Naive thymus-derived CD4-positive, alpha-beta T cell (primary cell): ENCODE measurements at regions of chr11 and their contacts with region 1.

Region 1: DNA sequence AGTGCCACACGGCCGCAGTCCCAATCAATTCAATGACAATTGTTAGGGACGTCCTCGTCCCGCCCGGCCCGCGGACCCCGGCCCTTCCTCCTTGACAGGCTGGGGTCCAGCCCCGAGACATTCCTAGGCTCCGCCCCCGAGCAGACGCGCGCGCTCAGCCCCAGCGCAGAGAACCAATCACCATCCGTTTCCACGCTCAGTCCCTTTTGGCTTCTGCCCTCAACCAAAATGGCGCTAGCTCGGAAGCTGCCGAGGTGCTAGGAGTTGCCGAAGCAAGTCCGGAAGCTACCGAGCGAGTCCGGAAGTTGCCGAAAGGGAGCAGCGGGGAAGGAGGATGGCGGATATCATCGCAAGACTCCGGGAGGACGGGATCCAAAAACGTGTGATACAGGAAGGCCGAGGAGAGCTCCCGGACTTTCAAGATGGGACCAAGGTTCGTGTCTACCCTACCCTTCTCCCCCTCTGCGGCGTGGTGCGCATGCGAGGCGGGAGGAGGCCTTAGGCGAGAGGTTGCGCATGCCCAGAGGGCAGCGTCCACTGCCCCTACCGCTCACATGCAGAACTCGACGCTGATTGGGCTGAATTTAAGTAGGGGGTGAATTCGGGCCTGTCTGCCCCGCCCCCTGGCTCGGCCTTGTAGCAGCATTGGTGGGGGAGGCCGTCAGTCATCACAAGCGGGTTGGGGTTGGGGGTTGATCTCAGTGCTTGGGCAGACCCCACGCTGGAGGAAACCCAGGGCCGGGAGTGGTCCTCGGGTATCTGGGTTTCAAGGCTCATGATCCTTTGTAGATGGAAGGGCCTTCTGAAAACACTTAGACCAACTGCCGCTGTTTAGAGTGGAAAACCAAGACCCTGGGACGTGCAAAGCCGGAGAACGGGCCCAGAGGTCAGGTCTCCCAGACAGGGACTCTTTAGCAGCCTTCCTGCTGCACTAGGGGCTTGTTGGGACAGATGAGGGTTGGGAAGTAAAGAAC is at the start of gene AIP:
- DNase-seq: peak; percentile 88 to 99 (median 98)
- ATAC-seq: peak; percentile 89
- H3K4me3 ChIP-seq: peak within 1 kb of the TSS; percentile 80
- H3K4me3 Mint-ChIP-seq: peak within 1 kb of the TSS; percentile 90 to 100 (median 96)
- H3K27ac ChIP-seq: peak within 1 kb of the TSS; percentile 80
- H3K27ac Mint-ChIP-seq: peak within 1 kb of the TSS; percentile 95 to 100 (median 99)
- H3K4me1 ChIP-seq: peaks cover 40 to 42% of the 10 kb centered on the region in 2 donors
- H3K4me1 Mint-ChIP-seq: peaks cover 40 to 57% (median 51%) of the 10 kb centered on the region in 7 donors
- H3K27me3 ChIP-seq: no peaks in the 10 kb centered on the region
- H3K27me3 Mint-ChIP-seq: peaks cover 0 to 5% (median 0%) of the 10 kb centered on the region in 5 donors
- total RNA-seq, gene AIP: 107 to 156 (median 137) TPM

Region 2: DNA sequence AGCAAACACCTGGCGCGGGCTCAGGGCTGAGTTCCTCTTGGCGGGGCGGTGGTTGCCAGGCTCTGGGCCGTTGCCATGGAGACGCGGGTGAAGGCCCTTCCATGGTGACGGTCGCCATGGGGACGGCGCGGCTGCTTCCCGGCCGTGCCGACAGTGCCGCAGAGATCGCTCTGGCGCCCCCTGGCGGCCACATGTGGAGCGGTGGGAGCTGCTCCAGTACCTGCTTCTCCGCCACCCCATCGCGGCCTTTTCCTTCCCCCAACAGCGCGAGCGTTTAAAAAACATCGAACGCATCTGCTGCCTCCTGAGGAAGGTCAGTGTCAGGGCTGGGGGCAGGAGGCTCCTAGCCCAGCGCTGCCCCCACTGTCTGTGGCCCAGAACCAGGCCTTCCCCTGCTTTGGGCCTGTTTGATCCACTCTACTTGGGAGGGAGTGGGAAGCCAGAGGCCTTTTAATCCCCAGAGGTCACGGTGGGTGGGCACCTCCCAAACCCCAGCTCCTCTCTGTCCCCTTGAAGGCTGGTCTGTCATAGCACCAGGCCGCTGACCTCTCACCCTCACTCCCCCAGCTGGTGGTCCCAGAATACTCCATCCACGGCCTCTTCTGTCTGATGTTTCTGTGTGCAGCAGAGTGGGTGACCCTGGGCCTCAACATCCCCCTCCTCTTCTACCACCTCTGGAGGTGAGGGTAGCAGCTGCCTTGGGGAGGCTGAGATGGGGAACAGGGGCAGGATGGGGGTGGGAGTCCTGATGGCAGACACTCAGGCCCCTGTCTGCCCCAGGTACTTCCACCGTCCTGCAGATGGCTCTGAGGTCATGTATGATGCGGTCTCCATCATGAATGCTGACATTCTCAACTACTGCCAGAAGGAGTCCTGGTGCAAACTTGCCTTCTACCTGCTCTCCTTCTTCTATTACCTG is 1200.4 kb before region 1 on chr11:
- CTCF ChIA-PET with region 1: no interaction called
- POLR2A ChIA-PET with region 1: no interaction called
- intact Hi-C with region 1: loop called in 1 of 2 experiments (anchors 10 kb)
- DNase-seq: peak; percentile 96 to 100 (median 99)
- ATAC-seq: peak; percentile 94
- H3K4me3 ChIP-seq: no peak overlapping the region
- H3K4me3 Mint-ChIP-seq: peak overlapping the region in 9 of 10 donors; percentile 16 to 72 (median 59)
- H3K27ac ChIP-seq: peak overlapping the region; percentile 27
- H3K27ac Mint-ChIP-seq: peak overlapping the region; percentile 68 to 93 (median 85)
- H3K4me1 ChIP-seq: peaks cover 16 to 21% of the 10 kb centered on the region in 2 donors
- H3K4me1 Mint-ChIP-seq: peaks cover 18 to 52% (median 37%) of the 10 kb centered on the region in 7 donors
- H3K27me3 ChIP-seq: no peaks in the 10 kb centered on the region
- H3K27me3 Mint-ChIP-seq: peaks cover 0 to 14% (median 0%) of the 10 kb centered on the region in 5 donors

Region 3: DNA sequence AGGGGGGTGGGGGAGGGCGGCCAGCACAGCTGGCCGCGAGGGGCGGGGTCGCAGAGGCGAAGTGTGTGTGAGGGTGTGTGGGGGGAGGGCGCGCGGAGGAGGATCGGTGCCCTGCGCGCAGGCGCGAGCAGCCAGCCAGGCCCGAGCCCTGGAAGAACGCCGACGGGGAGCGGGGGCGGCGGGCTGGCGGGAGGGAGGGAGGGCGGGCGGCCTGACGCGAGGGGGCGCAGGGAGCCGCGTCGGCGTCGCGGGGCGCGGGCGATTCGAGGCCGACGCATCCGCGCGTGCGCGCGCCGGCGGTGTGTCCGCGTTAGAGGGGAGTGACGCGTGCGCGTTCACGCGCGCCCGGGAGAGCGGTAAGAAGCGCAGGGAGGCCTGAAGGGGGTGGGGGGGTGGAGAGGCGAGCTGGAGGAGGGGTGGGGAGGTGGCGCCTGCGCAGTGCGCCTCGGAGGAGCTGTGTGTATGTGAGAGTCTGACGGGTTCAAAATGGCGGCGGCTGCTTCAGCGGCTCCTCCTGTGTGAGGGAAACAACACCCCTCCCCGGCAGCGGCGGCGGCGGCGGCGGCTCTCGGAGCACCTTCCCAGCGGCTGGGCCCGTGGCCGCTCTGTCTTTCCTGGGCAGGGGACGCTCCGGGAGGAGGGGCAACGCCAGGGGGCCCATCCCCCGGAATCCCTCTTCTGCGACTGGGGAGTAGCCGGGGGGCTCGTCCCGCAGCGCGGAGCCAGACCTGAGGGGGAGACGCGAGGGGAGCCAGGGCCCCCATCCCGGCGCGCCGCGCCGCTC is 364.1 kb before region 1 on chr11 and contains the start of gene KDM2A:
- CTCF ChIA-PET with region 1: no interaction called
- POLR2A ChIA-PET with region 1: interaction called, 4 read pairs
- intact Hi-C with region 1: loop called in 1 of 2 experiments (anchors 2 kb)
- DNase-seq: peak; percentile 93 to 100 (median 98)
- ATAC-seq: peak; percentile 92
- H3K4me3 ChIP-seq: peak within 1 kb of the TSS; percentile 86
- H3K4me3 Mint-ChIP-seq: peak within 1 kb of the TSS; percentile 95 to 99 (median 98)
- H3K27ac ChIP-seq: peak within 1 kb of the TSS; percentile 98
- H3K27ac Mint-ChIP-seq: peak within 1 kb of the TSS; percentile 84 to 98 (median 95)
- H3K4me1 ChIP-seq: peaks cover 3 to 7% of the 10 kb centered on the region in 2 donors
- H3K4me1 Mint-ChIP-seq: peaks cover 25 to 48% (median 40%) of the 10 kb centered on the region in 7 donors
- H3K27me3 ChIP-seq: no peaks in the 10 kb centered on the region
- H3K27me3 Mint-ChIP-seq: peaks cover 0 to 5% (median 0%) of the 10 kb centered on the region in 5 donors
- total RNA-seq, gene KDM2A: 146 to 298 (median 233) TPM

Region 4: GRCh38 chr11:67391304-67392132 is 91.6 kb before region 1 on chr11 and contains the start of gene RAD9A:
- CTCF ChIA-PET with region 1: interaction called, 4 read pairs
- POLR2A ChIA-PET with region 1: interaction called, 12 read pairs
- intact Hi-C with region 1: loop called in 1 of 2 experiments (anchors 1 kb)
- DNase-seq: peak; percentile 80 to 94 (median 87)
- ATAC-seq: peak; percentile 90
- H3K4me3 ChIP-seq: peak within 1 kb of the TSS; percentile 49
- H3K4me3 Mint-ChIP-seq: peak within 1 kb of the TSS; percentile 84 to 95 (median 88)
- H3K27ac ChIP-seq: peak within 1 kb of the TSS; percentile 83
- H3K27ac Mint-ChIP-seq: peak within 1 kb of the TSS; percentile 47 to 92 (median 82)
- H3K4me1 ChIP-seq: peaks cover 15 to 16% of the 10 kb centered on the region in 2 donors
- H3K4me1 Mint-ChIP-seq: peaks cover 27 to 47% (median 34%) of the 10 kb centered on the region in 7 donors
- H3K27me3 ChIP-seq: no peaks in the 10 kb centered on the region
- H3K27me3 Mint-ChIP-seq: peaks cover 0 to 3% (median 0%) of the 10 kb centered on the region in 5 donors
- total RNA-seq, gene RAD9A: 25.6 to 48.0 (median 45.0) TPM

Region 5: GRCh38 chr11:67409261-67409666 is 73.8 kb before region 1 on chr11:
- CTCF ChIA-PET with region 1: interaction called, 3 read pairs
- POLR2A ChIA-PET with region 1: interaction called, 106 read pairs
- intact Hi-C with region 1: no loop called
- DNase-seq: peak in 8 of 9 donors; percentile 62 to 82 (median 78)
- ATAC-seq: peak; percentile 78
- H3K4me3 ChIP-seq: peak overlapping the region; percentile 98
- H3K4me3 Mint-ChIP-seq: peak overlapping the region; percentile 80 to 100 (median 96)
- H3K27ac ChIP-seq: peak overlapping the region; percentile 87
- H3K27ac Mint-ChIP-seq: peak overlapping the region; percentile 83 to 98 (median 93)
- H3K4me1 ChIP-seq: peaks cover 86% of the 10 kb centered on the region in 2 donors
- H3K4me1 Mint-ChIP-seq: peaks cover 52 to 90% (median 78%) of the 10 kb centered on the region in 7 donors
- H3K27me3 ChIP-seq: no peaks in the 10 kb centered on the region
- H3K27me3 Mint-ChIP-seq: peaks cover 0 to 8% (median 0%) of the 10 kb centered on the region in 5 donors

Region 6: DNA sequence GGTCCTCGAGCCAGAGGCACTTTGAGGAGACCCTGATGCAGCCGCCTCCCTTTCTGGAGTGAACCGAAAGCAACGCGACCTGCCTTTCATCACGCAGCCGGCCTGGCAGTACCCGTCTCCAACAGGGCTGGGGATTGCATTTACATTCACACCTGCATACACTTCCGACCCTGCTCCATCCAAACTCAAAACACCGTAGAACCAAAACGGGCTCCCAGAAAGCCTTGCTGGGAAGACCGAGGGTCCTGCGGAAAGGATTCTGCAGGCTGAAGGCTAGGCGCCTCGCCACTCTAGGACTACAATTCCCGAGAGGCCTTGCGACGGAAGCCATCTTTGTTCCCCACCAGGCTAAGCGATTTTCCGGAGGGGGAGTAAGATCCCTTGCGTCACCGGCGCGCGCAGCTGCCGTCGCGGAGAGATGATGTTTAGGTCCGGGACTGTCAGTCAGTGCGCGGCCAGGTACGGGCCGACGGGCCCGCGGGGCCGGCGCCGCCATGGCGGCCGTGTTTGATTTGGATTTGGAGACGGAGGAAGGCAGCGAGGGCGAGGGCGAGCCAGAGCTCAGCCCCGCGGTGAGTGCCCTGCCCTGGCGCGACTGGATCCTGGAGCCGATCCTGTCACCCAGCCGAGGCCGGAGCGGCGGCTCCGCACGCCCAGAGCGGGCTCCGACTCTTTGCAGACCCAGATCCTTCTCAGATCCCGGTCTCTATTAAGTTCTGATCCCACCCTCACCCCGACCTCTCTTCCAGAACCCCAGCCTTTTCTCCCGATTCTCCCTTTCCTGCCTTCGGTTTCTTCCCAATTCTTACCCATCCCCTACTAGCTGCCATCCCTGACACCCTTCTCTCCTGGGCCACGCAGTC is 54.8 kb before region 1 on chr11 and contains the start of gene RPS6KB2:
- CTCF ChIA-PET with region 1: no interaction called
- POLR2A ChIA-PET with region 1: interaction called, 13 read pairs
- intact Hi-C with region 1: loop called (anchors 1 to 2 kb)
- DNase-seq: peak; percentile 95 to 100 (median 98)
- ATAC-seq: peak; percentile 97
- H3K4me3 ChIP-seq: peak within 1 kb of the TSS; percentile 82
- H3K4me3 Mint-ChIP-seq: peak within 1 kb of the TSS; percentile 92 to 100 (median 98)
- H3K27ac ChIP-seq: peak within 1 kb of the TSS; percentile 97
- H3K27ac Mint-ChIP-seq: peak within 1 kb of the TSS; percentile 94 to 98 (median 96)
- H3K4me1 ChIP-seq: peaks cover 19 to 38% of the 10 kb centered on the region in 2 donors
- H3K4me1 Mint-ChIP-seq: peaks cover 19 to 62% (median 43%) of the 10 kb centered on the region in 7 donors
- H3K27me3 ChIP-seq: no peaks in the 10 kb centered on the region
- H3K27me3 Mint-ChIP-seq: no peaks in the 10 kb centered on the region
- total RNA-seq, gene RPS6KB2: 61.9 to 83.9 (median 77.7) TPM

Region 7: GRCh38 chr11:67468835-67469811 is 14.0 kb before region 1 on chr11 and contains the start of gene TMEM134:
- CTCF ChIA-PET with region 1: interaction called, 6 read pairs
- POLR2A ChIA-PET with region 1: interaction called, 122 read pairs
- intact Hi-C with region 1: loop called (anchors 1 kb)
- DNase-seq: peak; percentile 82 to 95 (median 89)
- ATAC-seq: peak; percentile 92
- H3K4me3 ChIP-seq: peak within 1 kb of the TSS; percentile 74
- H3K4me3 Mint-ChIP-seq: peak within 1 kb of the TSS; percentile 87 to 95 (median 90)
- H3K27ac ChIP-seq: peak within 1 kb of the TSS; percentile 94
- H3K27ac Mint-ChIP-seq: peak within 1 kb of the TSS; percentile 79 to 97 (median 88)
- H3K4me1 ChIP-seq: peaks cover 17 to 37% of the 10 kb centered on the region in 2 donors
- H3K4me1 Mint-ChIP-seq: peaks cover 23 to 42% (median 29%) of the 10 kb centered on the region in 7 donors
- H3K27me3 ChIP-seq: no peaks in the 10 kb centered on the region
- H3K27me3 Mint-ChIP-seq: peaks cover 0 to 6% (median 0%) of the 10 kb centered on the region in 5 donors
- total RNA-seq, gene TMEM134: 52.4 to 94.6 (median 70.6) TPM